Heart left ventricle (tissue), 16 donors: ENCODE measurements at regions of chr11 and their contacts with region 1.

Region 1: GRCh38 chr11:1309498-1310317 is at the start of gene TOLLIP:
- DNase-seq: peak; percentile 96 to 99 (median 97)
- ATAC-seq: peak; percentile 96 to 99 (median 97)
- H3K4me3 ChIP-seq: peak within 1 kb of the TSS; percentile 58 to 98 (median 85)
- H3K27ac ChIP-seq: peak within 1 kb of the TSS; percentile 86 to 97 (median 94)
- H3K4me1 ChIP-seq: peaks cover 0 to 43% (median 27%) of the 10 kb centered on the region in 12 donors
- H3K27me3 ChIP-seq: no peaks in the 10 kb centered on the region
- CTCF ChIP-seq: peak in 7 of 12 donors; percentile 8 to 56 (median 41)
- POLR2A ChIP-seq: peak; percentile 6 to 92
- total RNA-seq, gene TOLLIP: 36.9 to 57.2 (median 44.9) TPM

Region 2: GRCh38 chr11:1262172-1263006 is 47.3 kb before region 1 on chr11:
- intact Hi-C with region 1: loop called in 5 of 10 experiments (anchors 1 to 5 kb)
- DNase-seq: peak; percentile 91 to 95 (median 93)
- ATAC-seq: peak; percentile 93 to 98 (median 95)
- H3K4me3 ChIP-seq: peak overlapping the region; percentile 12 to 69 (median 52)
- H3K27ac ChIP-seq: peak overlapping the region in 11 of 12 donors; percentile 65 to 83 (median 76)
- H3K4me1 ChIP-seq: peaks cover 0 to 18% (median 13%) of the 10 kb centered on the region in 12 donors
- H3K27me3 ChIP-seq: no peaks in the 10 kb centered on the region
- CTCF ChIP-seq: no peak
- POLR2A ChIP-seq: peak in 1 of 2 donors; percentile 53

Region 3: GRCh38 chr11:1335811-1336761 is 26.4 kb after region 1 on chr11:
- intact Hi-C with region 1: loop called in 1 of 10 experiments (anchors 2 kb)
- DNase-seq: peak; percentile 53 to 80 (median 68)
- ATAC-seq: peak; percentile 65 to 78 (median 75)
- H3K4me3 ChIP-seq: peak overlapping the region; percentile 24 to 59 (median 52)
- H3K27ac ChIP-seq: peak overlapping the region in 10 of 12 donors; percentile 18 to 80 (median 48)
- H3K4me1 ChIP-seq: peaks cover 4 to 25% (median 12%) of the 10 kb centered on the region in 12 donors
- H3K27me3 ChIP-seq: no peaks in the 10 kb centered on the region
- CTCF ChIP-seq: no peak
- POLR2A ChIP-seq: no peak

Region 4: DNA sequence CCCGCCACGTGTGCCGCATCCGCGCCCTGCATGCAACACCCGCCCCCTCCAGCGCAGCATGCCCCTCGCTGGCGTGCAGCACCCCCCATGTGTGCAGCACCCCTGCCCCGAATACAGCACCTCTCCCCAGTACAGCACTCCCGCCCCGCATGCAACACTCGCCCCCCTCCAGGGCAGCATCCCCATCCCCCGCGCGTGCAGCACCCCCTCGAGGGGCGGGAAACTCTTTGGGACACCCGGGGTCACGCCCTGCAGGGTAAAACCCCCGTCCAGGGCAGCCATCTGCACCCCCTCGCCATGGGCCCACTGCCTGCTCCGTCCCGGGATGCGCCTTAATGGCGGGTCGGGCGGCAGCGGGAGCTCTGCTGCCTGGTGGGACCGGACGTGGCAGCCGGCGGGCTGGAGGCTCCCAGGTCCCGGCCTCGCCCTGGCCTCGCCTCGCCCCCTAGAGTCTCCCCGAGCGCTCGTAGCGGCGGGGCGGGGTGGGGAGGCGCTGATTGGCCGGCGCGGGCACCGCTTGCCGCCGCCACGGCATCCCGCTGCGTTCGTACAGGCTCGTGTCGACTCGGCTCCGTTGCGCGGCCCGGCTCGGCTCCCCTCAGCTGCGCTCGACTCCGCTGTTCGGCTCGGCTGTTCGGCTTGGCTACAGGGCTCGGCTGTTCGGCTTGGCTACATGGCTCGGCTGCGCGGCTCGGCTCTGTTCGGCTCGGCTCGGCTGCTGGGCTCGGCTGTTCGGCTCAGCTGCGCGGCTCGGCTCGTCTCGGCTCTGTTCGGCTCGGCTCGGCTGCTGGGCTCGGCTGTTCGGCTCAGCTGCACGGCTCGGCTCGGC is 79.6 kb after region 1 on chr11:
- intact Hi-C with region 1: loop called in 2 of 10 experiments (anchors 5 to 10 kb)
- DNase-seq: peak; percentile 95 to 98 (median 97)
- ATAC-seq: peak; percentile 99
- H3K4me3 ChIP-seq: peak overlapping the region; percentile 34 to 76 (median 58)
- H3K27ac ChIP-seq: peak overlapping the region in 10 of 12 donors; percentile 27 to 74 (median 53)
- H3K4me1 ChIP-seq: peaks cover 0 to 25% (median 9%) of the 10 kb centered on the region in 12 donors
- H3K27me3 ChIP-seq: peaks cover 9 to 47% (median 22%) of the 10 kb centered on the region in 9 donors
- CTCF ChIP-seq: peak in 5 of 12 donors; percentile 12 to 44 (median 32)
- POLR2A ChIP-seq: no peak

Region 5: DNA sequence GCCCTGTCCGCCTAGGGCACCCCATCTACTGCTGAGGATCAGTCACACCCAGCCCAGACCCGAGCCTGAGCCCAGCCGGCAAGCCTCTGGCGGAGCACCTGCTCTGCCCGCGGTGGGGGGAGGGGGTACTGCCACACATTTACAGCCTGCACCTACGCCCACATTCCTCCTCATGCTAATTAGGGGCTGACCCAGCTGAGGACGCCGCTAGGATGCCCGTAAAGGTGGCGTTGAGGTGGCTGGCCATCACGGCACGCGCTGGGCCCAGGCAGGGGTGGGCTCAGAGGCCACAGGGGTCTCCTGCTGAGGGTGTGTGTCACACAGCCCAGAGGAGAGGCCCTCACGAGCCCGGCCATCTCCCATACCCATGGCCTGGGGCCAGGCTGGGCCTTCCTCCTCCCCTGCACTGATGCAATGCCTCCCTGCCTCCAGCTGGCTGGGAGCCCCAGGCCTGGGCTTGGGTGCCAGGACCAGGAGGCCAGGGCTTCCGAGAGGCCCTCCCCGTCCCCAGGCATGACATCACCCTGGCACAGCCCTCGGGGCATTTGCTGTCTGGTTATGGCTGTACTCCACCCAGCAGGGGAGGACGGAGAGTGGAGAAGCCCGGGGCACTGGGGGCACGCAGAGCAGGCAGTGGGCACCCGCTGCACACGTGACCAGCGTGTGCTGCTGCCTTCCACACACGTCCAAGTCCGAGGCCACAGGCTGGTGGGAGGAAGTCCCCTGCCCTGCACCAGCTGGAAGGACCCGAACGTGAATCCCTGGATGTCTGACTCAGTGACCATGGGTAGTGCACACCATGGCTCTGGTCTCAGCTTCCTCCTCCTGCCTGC is 249.6 kb after region 1 on chr11:
- intact Hi-C with region 1: no loop called
- DNase-seq: peak; percentile 90 to 96 (median 91)
- ATAC-seq: peak; percentile 83 to 90 (median 86)
- H3K4me3 ChIP-seq: no peak overlapping the region
- H3K27ac ChIP-seq: peak overlapping the region; percentile 78 to 99 (median 88)
- H3K4me1 ChIP-seq: peaks cover 4 to 57% (median 32%) of the 10 kb centered on the region in 12 donors
- H3K27me3 ChIP-seq: no peaks in the 10 kb centered on the region
- CTCF ChIP-seq: no peak
- POLR2A ChIP-seq: no peak